ENCODE measurements at regions of chr1 and their contacts with region 1.

Region 1: DNA sequence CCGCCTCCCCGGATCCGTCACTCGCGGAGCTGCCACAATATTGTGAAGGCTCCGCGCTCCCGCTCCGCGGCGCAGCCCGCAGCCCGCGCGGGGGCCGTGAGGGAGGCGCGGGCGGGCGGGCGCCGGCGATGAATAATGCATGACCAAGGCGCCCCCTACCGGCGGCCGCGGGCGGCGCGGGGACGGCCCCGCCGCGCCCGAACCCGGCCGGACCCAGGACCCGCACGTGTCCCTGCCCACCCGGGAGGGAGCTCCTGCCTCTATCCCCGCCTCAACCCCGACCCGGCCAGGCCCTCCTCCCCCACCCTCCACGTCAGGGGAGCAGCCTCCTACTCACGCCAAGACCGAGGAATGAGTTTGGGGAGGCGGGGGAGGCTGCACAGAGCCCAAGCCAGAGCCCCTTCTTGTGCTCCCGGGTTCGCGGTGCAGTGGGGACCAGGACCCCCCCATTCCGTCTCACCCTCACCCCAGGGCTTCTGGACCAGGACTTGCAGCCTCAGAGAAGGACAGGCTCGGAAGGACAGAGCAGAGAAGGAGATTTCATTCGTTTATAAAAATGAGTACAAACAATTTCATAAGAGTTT is 70.8 kb upstream of the CASZ1 start:
- DNase-seq: no peak
- H3K4me3 ChIP-seq: peak overlapping the region; percentile 32 to 49 (median 47)
- H3K27ac ChIP-seq: no peak overlapping the region
- H3K4me1 ChIP-seq: peaks cover 10% of the 10 kb centered on the region
- H3K27me3 ChIP-seq: no peaks in the 10 kb centered on the region
- CTCF ChIP-seq: peak in 1 of 2 donors; percentile 28

Region 2: GRCh38 chr1:10459181-10459580 is 408.0 kb before region 1 on chr1:
- CTCF ChIA-PET with region 1: no interaction called
- dilution Hi-C with region 1: no loop called
- in situ Hi-C with region 1: no loop called
- intact Hi-C with region 1: no loop called
- DNase-seq: peak; percentile 78
- H3K4me3 ChIP-seq: no peak overlapping the region
- H3K27ac ChIP-seq: no peak overlapping the region
- H3K4me1 ChIP-seq: peaks cover 30% of the 10 kb centered on the region
- H3K27me3 ChIP-seq: no peaks in the 10 kb centered on the region
- CTCF ChIP-seq: no peak

Region 3: GRCh38 chr1:10494754-10495474 is 372.3 kb before region 1 on chr1:
- CTCF ChIA-PET with region 1: no interaction called
- dilution Hi-C with region 1: no loop called
- in situ Hi-C with region 1: loop called in 1 of 2 experiments (anchors 25 kb)
- intact Hi-C with region 1: loop called (anchors 1 kb)
- DNase-seq: peak; percentile 74
- H3K4me3 ChIP-seq: peak overlapping the region in 1 of 3 experiments; percentile 19
- H3K27ac ChIP-seq: peak overlapping the region; percentile 96
- H3K4me1 ChIP-seq: peaks cover 27% of the 10 kb centered on the region
- H3K27me3 ChIP-seq: no peaks in the 10 kb centered on the region
- CTCF ChIP-seq: peak; percentile 78 to 93

Region 4: DNA sequence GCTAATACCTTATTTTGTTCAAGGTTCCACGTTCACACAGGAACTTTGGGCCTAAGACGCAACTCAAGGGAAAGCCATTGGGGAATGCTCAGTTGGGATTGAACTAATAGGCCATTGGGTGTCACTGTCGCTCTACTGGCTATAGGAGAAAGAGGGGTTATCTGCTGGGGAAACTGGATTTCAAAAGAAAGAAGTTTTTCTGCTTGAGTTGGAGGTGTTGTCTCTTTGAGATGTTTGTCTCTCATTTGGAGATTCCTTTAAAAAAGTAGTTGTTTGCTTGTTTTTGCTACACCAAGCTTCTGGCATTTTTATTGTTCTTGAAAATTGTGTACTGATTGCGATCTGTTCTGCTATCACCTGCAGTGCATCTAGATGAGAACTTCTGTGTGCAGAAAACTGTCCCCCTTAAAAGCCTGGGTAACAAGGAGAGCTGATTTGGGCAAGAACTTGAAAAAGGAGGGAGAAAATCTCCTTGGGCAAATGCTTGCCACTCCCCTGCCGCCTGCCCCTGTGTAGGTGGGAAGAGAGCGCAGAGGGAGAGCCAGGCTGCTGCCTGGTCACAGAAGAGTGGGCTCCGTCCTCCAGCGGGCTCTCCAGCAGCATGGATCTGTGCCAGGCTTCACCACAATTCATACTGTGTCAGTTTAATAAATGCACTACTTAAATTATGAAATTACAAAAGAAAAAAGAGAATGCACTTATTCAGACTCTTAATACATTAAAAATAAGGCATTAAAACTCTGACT is 352.6 kb before region 1 on chr1:
- CTCF ChIA-PET with region 1: interaction called, 5 read pairs
- dilution Hi-C with region 1: no loop called
- in situ Hi-C with region 1: loop called (anchors 10 to 25 kb)
- intact Hi-C with region 1: loop called (anchors 1 kb)
- DNase-seq: peak; percentile 40
- H3K4me3 ChIP-seq: no peak overlapping the region
- H3K27ac ChIP-seq: no peak overlapping the region
- H3K4me1 ChIP-seq: peaks cover 55% of the 10 kb centered on the region
- H3K27me3 ChIP-seq: no peaks in the 10 kb centered on the region
- CTCF ChIP-seq: peak; percentile 63 to 64

Region 5: GRCh38 chr1:10591010-10591409 is 276.2 kb before region 1 on chr1:
- CTCF ChIA-PET with region 1: no interaction called
- dilution Hi-C with region 1: no loop called
- in situ Hi-C with region 1: no loop called
- intact Hi-C with region 1: no loop called
- DNase-seq: no peak
- H3K4me3 ChIP-seq: no peak overlapping the region
- H3K27ac ChIP-seq: no peak overlapping the region
- H3K4me1 ChIP-seq: no peaks in the 10 kb centered on the region
- H3K27me3 ChIP-seq: no peaks in the 10 kb centered on the region
- CTCF ChIP-seq: no peak

Region 6: GRCh38 chr1:10694633-10695627 is 172.3 kb before region 1 on chr1:
- CTCF ChIA-PET with region 1: no interaction called
- dilution Hi-C with region 1: no loop called
- in situ Hi-C with region 1: loop called in 1 of 2 experiments (anchors 25 kb)
- intact Hi-C with region 1: loop called (anchors 1 kb)
- DNase-seq: peak; percentile 78
- H3K4me3 ChIP-seq: peak overlapping the region in 2 of 3 experiments; percentile 42 to 53
- H3K27ac ChIP-seq: no peak overlapping the region
- H3K4me1 ChIP-seq: peaks cover 16% of the 10 kb centered on the region
- H3K27me3 ChIP-seq: no peaks in the 10 kb centered on the region
- CTCF ChIP-seq: no peak

Region 7: DNA sequence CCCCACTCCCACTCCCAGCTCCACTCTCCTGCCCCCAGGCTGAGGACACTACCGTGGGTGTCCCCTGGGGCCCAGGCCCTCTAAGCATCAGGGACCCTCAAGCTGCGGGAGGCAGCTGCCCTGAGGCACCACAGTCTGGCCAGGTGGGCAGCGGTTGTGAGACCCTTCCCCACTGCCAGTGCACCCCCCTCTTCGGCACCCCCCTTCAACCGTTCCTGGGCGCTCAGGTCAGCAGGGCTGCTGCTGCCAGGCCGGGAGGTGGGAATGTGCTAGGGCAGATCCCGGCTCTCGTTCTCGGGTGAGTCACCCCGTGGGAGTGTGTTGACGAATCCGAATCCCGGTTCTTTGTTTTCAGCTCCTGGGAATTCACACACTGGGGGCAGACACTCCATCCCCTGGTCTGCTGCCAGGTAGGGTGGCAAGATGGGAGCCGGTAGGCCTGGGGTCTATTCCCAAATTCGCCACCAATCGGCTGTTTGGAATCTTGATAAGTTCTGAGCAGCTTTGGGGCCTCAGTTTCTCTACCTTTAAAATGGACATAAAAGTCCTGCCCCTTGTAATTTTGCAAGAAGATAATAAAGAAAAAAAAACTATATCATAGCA is 42.3 kb before region 1 on chr1:
- CTCF ChIA-PET with region 1: no interaction called
- dilution Hi-C with region 1: no loop called
- in situ Hi-C with region 1: no loop called
- intact Hi-C with region 1: loop called (anchors 1 kb)
- DNase-seq: peak; percentile 96
- H3K4me3 ChIP-seq: peak overlapping the region; percentile 13 to 52 (median 15)
- H3K27ac ChIP-seq: peak overlapping the region; percentile 88
- H3K4me1 ChIP-seq: peaks cover 25% of the 10 kb centered on the region
- H3K27me3 ChIP-seq: no peaks in the 10 kb centered on the region
- CTCF ChIP-seq: no peak

Region 8: GRCh38 chr1:10909697-10910671 is 42.8 kb after region 1 on chr1:
- CTCF ChIA-PET with region 1: no interaction called
- dilution Hi-C with region 1: no loop called
- in situ Hi-C with region 1: no loop called
- intact Hi-C with region 1: loop called (anchors 2 kb)
- DNase-seq: peak; percentile 27
- H3K4me3 ChIP-seq: no peak overlapping the region
- H3K27ac ChIP-seq: no peak overlapping the region
- H3K4me1 ChIP-seq: peaks cover 9% of the 10 kb centered on the region
- H3K27me3 ChIP-seq: no peaks in the 10 kb centered on the region
- CTCF ChIP-seq: peak; percentile 41 to 79

Region 9: GRCh38 chr1:10965546-10966226 is 98.5 kb after region 1 on chr1:
- CTCF ChIA-PET with region 1: no interaction called
- dilution Hi-C with region 1: loop called (anchors 5 kb)
- in situ Hi-C with region 1: no loop called
- intact Hi-C with region 1: no loop called
- DNase-seq: peak; percentile 24
- H3K4me3 ChIP-seq: no peak overlapping the region
- H3K27ac ChIP-seq: no peak overlapping the region
- H3K4me1 ChIP-seq: peaks cover 7% of the 10 kb centered on the region
- H3K27me3 ChIP-seq: no peaks in the 10 kb centered on the region
- CTCF ChIP-seq: no peak

Measured in mammary epithelial cell (primary cell).